ENCODE measurements at regions of chr1 and their contacts with region 1.

Region 1: DNA sequence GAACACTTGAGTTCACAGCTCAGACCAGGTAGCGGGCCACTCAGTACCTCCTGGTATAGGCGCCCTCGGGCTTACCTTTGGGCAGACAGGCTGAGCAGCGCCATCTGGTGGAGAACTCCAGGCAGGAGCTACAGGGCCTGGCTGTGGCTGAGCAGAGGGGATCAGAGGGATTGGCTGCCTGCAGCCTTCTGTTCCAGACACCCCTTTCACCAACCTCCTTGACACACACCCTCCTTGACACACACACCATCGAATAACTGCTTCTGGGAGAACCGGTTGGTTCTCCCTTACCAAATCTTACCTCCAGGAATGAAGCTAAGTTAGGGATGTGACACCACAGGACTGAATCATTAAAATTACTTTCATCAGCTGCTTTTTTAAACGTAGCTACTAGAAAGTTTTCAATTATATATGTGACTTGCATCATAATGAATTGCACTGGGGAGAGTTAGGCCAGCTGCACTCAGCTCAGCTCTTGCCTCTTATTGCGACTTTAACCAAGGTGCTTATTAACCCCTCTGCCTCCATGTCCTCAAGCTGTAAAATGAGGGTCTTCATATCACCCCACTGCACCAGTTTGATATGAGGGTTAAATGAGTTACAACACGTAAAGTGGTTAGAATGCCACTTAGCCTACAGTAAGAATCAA is 6.6 kb downstream of the LIN28A start:
- H3K4me3 ChIP-seq: no peak overlapping the region
- H3K27ac ChIP-seq: no peak overlapping the region
- H3K4me1 ChIP-seq: no peaks in the 10 kb centered on the region
- CTCF ChIP-seq: peak; percentile 70

Region 2: DNA sequence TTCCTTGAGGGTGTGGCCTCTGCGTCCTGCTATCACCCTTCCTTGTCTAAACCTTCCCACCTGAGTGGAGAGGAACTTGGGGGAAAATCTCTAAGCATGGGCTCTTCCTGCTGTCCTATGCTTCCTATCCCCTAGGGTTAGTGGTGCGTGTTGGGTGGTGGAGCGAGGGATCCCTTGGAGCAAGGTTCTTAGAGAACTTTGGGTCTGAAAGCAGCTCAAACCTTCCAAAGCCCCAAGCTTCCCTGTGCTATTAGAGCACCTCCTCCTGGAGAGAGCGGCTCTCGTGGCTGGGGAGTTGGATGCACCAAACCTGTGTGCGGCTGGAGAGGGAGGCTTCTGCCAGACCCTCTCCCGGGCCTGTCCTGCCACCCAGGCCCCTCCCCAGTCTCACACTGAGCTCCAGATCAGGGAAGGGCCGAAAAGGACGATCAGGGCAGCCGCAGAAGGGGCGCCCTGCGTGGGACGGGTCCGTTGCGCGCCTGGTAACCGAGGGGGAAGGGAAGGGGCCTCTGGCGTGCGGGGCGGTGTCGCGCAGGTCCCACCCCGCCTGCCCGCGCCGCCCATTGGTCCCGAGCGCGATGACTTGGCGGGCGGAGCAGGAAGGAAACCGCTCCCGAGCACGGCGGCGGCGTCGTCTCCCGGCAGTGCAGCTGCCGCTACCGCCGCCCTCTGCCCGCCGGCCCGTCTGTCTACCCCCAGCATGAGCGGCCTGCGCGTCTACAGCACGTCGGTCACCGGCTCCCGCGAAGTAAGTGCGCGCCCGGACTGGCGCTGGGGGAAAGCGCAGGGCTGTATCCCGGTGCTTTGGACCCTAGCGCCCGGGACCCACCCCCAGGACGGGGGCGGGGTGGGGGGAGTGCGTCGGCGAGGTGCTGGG is 137.5 kb before region 1 on chr1 and contains the start of gene SH3BGRL3:
- CTCF ChIA-PET with region 1: interaction called, 42 read pairs
- POLR2A ChIA-PET with region 1: interaction called, 4 read pairs
- H3K4me3 ChIP-seq: peak within 1 kb of the TSS; percentile 63
- H3K27ac ChIP-seq: 0 out of 2 replicates have a peak within 1 kb of the TSS, but pooled peaks have one; percentile 7
- H3K4me1 ChIP-seq: 0 out of 2 replicates have a peak, but pooled peaks cover 3% of the 10 kb centered on the region
- CTCF ChIP-seq: peak; percentile 92

Region 3: DNA sequence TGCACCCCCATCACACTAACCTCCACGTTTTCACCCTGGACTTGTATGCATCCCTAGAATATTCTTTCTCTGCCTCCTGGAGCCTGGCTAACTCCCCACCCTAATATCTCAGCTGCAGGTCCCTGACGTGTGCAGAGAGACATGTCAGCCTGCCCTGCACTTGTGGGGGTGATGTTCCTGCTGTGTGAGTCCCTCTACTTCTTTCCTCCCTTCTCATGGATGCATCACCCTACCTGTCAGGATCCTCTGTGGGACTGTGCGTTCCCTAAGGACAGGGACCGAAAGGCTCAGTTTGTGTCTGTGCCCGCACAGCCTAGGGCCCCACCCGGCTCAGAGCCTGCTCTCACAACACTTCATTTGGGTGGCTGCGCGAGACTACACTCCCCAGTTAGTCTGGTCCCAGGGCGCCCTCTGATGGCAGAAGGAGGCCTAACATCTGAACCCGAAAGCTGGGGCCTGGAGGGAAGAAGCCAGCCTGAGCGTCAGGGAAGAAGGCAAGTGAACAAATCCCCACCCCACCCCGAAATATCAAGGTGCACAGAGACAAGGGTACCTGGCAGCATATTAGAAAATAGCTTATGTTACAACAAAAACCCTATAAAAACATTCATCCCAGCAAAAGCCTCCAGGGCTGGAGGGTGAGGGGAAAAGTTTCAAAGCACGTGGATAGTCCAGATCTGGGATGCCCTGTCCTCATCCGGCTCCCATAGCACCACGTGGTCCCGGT is 95.8 kb before region 1 on chr1:
- CTCF ChIA-PET with region 1: interaction called, 16 read pairs
- POLR2A ChIA-PET with region 1: no interaction called
- H3K4me3 ChIP-seq: no peak overlapping the region
- H3K27ac ChIP-seq: no peak overlapping the region
- H3K4me1 ChIP-seq: no peaks in the 10 kb centered on the region
- CTCF ChIP-seq: peak; percentile 85

Region 4: GRCh38 chr1:26399034-26399433 is 18.2 kb before region 1 on chr1:
- CTCF ChIA-PET with region 1: interaction called, 35 read pairs
- POLR2A ChIA-PET with region 1: no interaction called
- H3K4me3 ChIP-seq: no peak overlapping the region
- H3K27ac ChIP-seq: no peak overlapping the region
- H3K4me1 ChIP-seq: no peaks in the 10 kb centered on the region
- CTCF ChIP-seq: no peak

Region 5: DNA sequence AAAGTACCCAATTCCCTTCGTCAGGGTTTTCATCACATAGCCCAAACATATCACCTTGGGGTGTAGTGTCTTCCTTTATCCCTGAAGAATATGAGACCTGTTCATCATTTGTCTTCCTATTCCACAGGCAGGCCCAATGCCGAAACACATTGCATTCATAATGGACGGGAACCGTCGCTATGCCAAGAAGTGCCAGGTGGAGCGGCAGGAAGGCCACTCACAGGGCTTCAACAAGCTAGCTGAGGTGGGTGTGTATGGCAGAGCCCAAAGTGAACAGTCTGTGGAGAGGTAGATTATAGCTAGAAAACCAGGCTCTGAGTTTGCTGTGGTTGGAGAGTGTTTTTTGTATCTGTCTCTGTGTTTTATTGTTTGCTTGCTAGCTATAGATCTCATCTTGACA is 20.8 kb after region 1 on chr1:
- CTCF ChIA-PET with region 1: interaction called, 53 read pairs
- POLR2A ChIA-PET with region 1: no interaction called
- H3K4me3 ChIP-seq: no peak overlapping the region
- H3K27ac ChIP-seq: no peak overlapping the region
- H3K4me1 ChIP-seq: peaks cover 1% of the 10 kb centered on the region; the same call in 1 of the 2 replicates
- CTCF ChIP-seq: no peak